ENCODE measurements at regions of chr14 and their contacts with region 1.

Region 1: GRCh38 chr14:49908432-49908781 is 15.5 kb downstream of the ARF6 start:
- DNase-seq: no peak
- H3K4me3 Mint-ChIP-seq: peak overlapping the region; percentile 51
- H3K27ac Mint-ChIP-seq: peak overlapping the region; percentile 97
- H3K4me1 Mint-ChIP-seq: peaks cover 25% of the 10 kb centered on the region
- H3K27me3 Mint-ChIP-seq: no peaks in the 10 kb centered on the region
- CTCF ChIP-seq: no peak

Region 2: DNA sequence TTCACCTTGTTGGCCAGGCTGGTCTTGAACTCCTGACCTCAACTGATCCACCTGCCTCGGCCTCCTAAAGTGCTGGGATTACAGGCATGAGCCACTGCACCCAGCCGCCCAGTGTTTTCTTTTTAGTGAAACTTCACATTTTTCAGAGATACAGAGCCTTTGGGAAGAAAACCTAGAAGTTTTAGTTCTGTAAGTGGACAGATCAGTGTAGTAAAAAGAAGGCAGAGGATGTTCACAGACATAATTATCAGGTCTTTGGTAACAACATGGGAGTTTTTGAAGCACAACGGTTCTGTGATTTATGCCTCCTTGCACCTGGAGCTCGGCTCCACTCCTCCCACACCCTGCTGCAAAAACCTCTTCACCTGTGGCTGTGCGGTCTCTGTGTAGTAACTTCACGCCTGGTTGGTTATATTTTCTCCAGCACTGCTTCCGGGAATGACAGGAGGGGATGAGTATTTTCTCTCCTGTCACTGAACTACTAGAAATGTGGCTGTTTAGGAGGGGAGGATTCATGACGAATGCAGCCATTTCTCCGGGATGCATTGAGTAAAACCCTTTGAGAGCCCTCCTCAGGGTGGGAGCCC is 51.5 kb after region 1 on chr14:
- CTCF ChIA-PET with region 1: interaction called, 3 read pairs
- POLR2A ChIA-PET with region 1: interaction called, 59 read pairs
- intact Hi-C with region 1: no loop called
- DNase-seq: no peak
- H3K4me3 Mint-ChIP-seq: no peak overlapping the region
- H3K27ac Mint-ChIP-seq: no peak overlapping the region
- H3K4me1 Mint-ChIP-seq: peaks cover 31% of the 10 kb centered on the region
- H3K27me3 Mint-ChIP-seq: no peaks in the 10 kb centered on the region
- CTCF ChIP-seq: no peak

Region 3: GRCh38 chr14:50198499-50198898 is 290.1 kb after region 1 on chr14:
- CTCF ChIA-PET with region 1: no interaction called
- POLR2A ChIA-PET with region 1: no interaction called
- intact Hi-C with region 1: no loop called
- DNase-seq: no peak
- H3K4me3 Mint-ChIP-seq: no peak overlapping the region
- H3K27ac Mint-ChIP-seq: no peak overlapping the region
- H3K4me1 Mint-ChIP-seq: no peaks in the 10 kb centered on the region
- H3K27me3 Mint-ChIP-seq: no peaks in the 10 kb centered on the region
- CTCF ChIP-seq: no peak

Measured in MCF 10A (cell line).